HEK293T (cell line): ENCODE measurements at regions of chrX and their contacts with region 1.

Region 1: DNA sequence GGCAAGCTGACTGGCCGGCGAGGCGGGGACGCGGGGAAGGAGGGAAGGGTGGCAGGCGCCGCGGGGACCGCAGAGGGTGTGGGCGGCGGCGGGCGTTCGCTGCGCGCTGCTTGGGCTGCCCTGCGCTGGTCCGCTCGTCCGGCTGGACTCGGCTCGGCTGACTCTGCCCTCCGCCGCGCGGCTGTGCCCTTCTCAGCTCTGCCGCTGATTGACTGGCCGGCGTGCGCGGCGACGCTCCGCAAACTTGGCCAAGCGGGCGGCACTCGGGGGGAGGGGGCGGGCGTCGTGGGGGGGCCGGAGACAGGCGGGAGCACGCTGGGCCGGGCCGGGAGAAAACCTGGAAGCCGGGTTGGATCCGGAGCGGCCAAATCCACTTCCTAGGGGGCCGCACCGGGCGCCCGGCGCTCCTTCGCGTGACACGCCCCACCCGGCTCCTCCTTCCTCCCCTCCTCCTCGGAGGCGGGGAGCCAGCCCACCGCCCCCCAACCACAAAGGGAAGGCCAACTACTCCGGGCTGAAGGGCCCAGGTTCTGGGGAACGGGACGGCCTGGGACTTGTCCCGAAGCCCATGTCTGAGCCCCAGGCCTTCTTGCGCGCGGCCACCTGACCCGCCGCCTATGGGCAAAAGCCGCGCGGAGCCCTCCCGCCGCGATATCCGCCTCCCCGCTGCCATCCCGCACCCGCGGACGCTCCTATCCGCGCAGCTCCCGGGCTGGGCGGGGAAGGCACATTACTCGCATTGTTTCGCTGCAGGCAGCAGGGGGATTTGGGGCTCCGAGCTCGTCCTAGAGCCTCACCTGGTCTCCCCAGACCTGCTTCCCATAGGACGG is at the start of gene GPC4:
- DNase-seq: peak; percentile 83

Region 2: GRCh38 chrX:133402042-133402453 is 13.4 kb before region 1 on chrX:
- CTCF ChIA-PET with region 1: no interaction called
- POLR2A ChIA-PET with region 1: no interaction called
- DNase-seq: no peak

Region 3: GRCh38 chrX:133444951-133445831 is 29.7 kb after region 1 on chrX:
- CTCF ChIA-PET with region 1: interaction called, 3 read pairs
- POLR2A ChIA-PET with region 1: interaction called, 10 read pairs
- DNase-seq: peak; percentile 53